Posterior cingulate gyrus (tissue), 11 donors: ENCODE measurements at regions of chr1 and their contacts with region 1.

Region 1: DNA sequence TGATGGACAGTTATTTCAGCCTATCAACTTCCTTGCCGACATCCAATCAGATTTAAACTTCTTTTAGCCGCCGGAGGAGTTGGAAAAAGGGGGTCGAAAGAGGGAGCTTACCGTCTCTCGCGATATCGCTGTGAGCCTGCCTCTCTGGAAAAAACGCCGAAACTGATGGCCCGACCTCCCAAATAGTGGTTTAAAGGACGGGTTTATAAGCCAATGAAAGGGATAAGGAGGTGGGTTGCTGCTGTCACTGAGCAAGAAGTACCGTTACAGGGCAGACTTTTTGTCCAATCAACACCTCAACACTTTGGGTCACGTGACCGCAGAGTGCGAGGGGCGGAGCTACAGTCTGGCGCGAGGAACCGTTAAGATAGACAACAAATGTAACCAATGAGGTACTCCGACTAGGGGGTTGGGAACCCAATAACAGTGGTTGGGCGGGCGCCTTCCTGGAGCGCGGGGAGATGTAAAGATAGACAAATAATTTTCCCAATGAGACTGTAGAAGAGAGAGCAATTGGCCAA is at the start of gene RBM15:
- DNase-seq: peak; percentile 96 to 100 (median 98)

Region 2: DNA sequence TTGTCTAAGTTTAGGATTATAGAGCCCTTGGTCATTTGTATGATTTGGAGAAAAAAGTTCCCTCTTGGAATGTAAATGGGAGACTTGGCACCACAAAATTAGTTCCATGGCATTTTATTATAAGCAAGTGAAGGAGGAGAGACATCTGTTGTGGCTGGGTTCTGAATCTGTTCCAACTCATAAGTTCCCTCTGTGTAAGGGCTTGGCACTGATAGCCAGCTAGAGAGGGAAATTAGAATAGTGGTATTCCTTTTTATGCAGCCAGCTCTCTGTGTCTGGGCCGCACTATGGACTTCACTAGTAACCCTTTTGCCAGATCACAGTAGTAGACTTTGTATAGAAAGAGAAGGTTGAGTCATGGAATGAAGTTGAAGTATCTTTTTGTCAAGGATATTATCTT is 759.5 kb before region 1 on chr1:
- intact Hi-C with region 1: no loop called
- DNase-seq: no peak

Region 3: DNA sequence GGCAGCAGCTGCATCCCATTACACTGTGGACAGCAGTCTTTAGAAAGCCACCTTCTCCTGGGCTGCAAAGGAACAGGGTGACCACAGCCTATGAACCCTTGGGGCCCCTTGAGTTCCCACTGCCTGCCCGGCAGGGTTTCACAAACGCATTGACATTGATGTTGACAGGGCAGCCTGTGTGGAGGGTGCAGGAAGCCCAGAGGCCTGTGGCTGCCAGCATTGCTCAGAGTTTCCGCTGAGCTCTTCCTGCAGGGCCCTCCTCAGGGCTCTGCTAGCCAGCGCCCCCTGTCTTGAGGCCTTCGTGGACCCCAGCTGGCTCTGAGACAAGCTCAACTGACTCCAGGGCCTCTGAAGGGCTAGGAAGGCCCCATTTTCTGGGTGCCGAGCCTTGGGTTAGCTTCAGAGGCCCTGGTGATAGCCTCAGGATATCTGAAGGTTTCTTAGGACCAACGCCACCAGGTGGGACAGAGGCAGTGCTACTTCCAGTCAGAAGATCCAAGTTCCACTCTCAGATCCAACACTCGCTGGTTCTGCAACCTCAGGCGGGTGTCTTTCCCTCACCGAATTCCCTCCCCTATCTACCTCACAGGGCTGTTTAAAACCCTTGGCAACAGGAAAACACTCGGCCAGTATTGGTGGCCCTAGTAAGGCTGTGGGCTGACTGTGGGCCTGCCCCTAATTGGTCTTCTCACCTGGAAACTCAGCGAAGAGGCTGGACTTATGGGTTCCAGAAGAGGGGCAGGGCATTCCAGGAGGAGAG is 548.0 kb before region 1 on chr1:
- intact Hi-C with region 1: no loop called
- DNase-seq: peak in 5 of 10 donors; percentile 12 to 86 (median 26)

Region 4: GRCh38 chr1:110034451-110035235 is 304.3 kb before region 1 on chr1 and contains the start of gene STRIP1:
- intact Hi-C with region 1: loop called (anchors 2 kb)
- DNase-seq: peak; percentile 82 to 98 (median 88)

Region 5: GRCh38 chr1:110407260-110408210 is 68.6 kb after region 1 on chr1 and contains the start of gene LAMTOR5:
- intact Hi-C with region 1: loop called (anchors 1 kb)
- DNase-seq: peak; percentile 89 to 99 (median 93)